Heart right ventricle (tissue), 16 donors: ENCODE measurements at regions of chr13 and their contacts with region 1.

Region 1: DNA sequence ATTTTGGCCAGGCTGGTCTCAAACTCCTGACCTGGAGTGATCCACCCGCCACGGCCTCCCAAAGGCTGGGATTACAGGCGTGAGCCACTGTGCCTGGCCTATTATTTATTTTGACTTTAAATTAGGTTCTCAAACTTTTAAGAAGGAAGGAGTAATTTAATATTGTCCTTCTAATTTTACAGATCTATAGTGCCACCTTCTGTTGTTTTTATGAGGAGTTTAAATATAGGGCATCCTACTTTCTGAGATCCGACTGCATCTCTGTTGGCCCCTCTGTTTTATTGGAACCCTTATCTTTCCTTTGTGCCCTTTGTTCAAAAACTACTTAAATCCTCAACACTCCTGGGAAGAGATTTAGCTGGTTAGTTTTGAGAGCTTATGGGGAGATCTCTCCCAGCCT is 25.4 kb upstream of the ZMYM5 start:
- DNase-seq: no peak
- ATAC-seq: no peak
- H3K4me3 ChIP-seq: no peak overlapping the region
- H3K27ac ChIP-seq: no peak overlapping the region
- H3K4me1 ChIP-seq: no peaks in the 10 kb centered on the region
- H3K27me3 ChIP-seq: no peaks in the 10 kb centered on the region
- CTCF ChIP-seq: peak in 7 of 9 donors; percentile 12 to 44 (median 31)

Region 2: GRCh38 chr13:19587635-19588300 is 301.0 kb before region 1 on chr13:
- intact Hi-C with region 1: loop called in 1 of 10 experiments (anchors 5 kb)
- DNase-seq: peak in 1 of 2 donors; percentile 12
- ATAC-seq: peak in 6 of 8 donors; percentile 34 to 79 (median 72)
- H3K4me3 ChIP-seq: no peak overlapping the region
- H3K27ac ChIP-seq: no peak overlapping the region
- H3K4me1 ChIP-seq: peaks cover 0 to 13% (median 0%) of the 10 kb centered on the region in 9 donors
- H3K27me3 ChIP-seq: peaks cover 0 to 11% (median 0%) of the 10 kb centered on the region in 7 donors
- CTCF ChIP-seq: peak in 8 of 9 donors; percentile 11 to 64 (median 56)